ENCODE measurements at regions of chr1 and their contacts with region 1.

Region 1: GRCh38 chr1:210400043-210400840 is 71.5 kb downstream of the HHAT start:
- DNase-seq: peak; percentile 85
- H3K4me3 Mint-ChIP-seq: peak overlapping the region; percentile 49
- H3K27ac Mint-ChIP-seq: peak overlapping the region; percentile 93
- H3K4me1 Mint-ChIP-seq: peaks cover 44% of the 10 kb centered on the region
- H3K27me3 Mint-ChIP-seq: peaks cover 5% of the 10 kb centered on the region

Region 2: GRCh38 chr1:209827384-209828262 is 572.6 kb before region 1 on chr1 and contains the start of gene UTP25:
- CTCF ChIA-PET with region 1: interaction called, 4 read pairs
- intact Hi-C with region 1: loop called (anchors 2 kb)
- DNase-seq: peak; percentile 97
- H3K4me3 Mint-ChIP-seq: peak within 1 kb of the TSS; percentile 79
- H3K27ac Mint-ChIP-seq: peak within 1 kb of the TSS; percentile 86
- H3K4me1 Mint-ChIP-seq: peaks cover 34% of the 10 kb centered on the region
- H3K27me3 Mint-ChIP-seq: peaks cover 4% of the 10 kb centered on the region
- total RNA-seq, gene UTP25: 4.1 to 4.6 TPM

Region 3: GRCh38 chr1:210143465-210144062 is 256.7 kb before region 1 on chr1:
- CTCF ChIA-PET with region 1: interaction called, 7 read pairs
- intact Hi-C with region 1: loop called (anchors 1 kb)
- DNase-seq: peak; percentile 77
- H3K4me3 Mint-ChIP-seq: no peak overlapping the region
- H3K27ac Mint-ChIP-seq: no peak overlapping the region
- H3K4me1 Mint-ChIP-seq: no peaks in the 10 kb centered on the region
- H3K27me3 Mint-ChIP-seq: peaks cover 13% of the 10 kb centered on the region

Region 4: DNA sequence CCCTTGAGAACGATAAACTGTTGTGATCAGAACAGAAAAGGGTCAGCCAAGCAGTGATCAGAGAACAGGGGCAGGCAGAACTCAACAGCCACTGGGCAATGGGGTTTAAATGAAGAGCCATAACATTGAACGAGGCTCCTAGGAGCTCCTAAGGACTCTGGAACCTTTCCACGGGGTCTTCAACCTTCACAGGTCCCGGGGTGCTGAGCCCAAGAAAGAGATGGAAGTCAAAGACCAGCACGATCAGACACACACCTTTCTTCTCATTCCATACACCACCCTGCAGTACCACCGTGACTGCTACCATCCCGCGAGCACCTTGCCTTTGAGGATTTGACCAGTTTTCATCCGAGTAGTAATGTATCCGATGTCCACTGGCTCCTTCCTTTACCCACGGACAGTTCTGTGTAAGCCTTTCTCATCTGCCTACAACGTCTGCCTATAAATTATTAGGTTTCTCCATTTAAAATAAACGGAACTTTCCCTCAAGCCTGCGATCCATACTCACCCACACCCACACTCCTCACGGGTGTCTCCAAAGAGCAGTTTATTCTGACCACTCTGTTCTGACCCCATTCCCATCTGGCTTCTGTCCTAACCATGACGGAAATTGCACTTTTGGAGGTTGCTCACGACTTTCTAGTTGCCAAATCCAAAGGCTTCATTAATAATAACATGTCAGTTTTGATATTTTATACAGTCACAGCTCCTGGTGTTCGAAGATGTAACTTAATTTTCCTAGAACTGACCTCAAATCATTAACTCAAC is 88.3 kb before region 1 on chr1:
- CTCF ChIA-PET with region 1: interaction called, 3 read pairs
- intact Hi-C with region 1: loop called (anchors 1 kb)
- DNase-seq: no peak
- H3K4me3 Mint-ChIP-seq: peak overlapping the region; percentile 79
- H3K27ac Mint-ChIP-seq: no peak overlapping the region
- H3K4me1 Mint-ChIP-seq: peaks cover 4% of the 10 kb centered on the region
- H3K27me3 Mint-ChIP-seq: peaks cover 20% of the 10 kb centered on the region

Region 5: DNA sequence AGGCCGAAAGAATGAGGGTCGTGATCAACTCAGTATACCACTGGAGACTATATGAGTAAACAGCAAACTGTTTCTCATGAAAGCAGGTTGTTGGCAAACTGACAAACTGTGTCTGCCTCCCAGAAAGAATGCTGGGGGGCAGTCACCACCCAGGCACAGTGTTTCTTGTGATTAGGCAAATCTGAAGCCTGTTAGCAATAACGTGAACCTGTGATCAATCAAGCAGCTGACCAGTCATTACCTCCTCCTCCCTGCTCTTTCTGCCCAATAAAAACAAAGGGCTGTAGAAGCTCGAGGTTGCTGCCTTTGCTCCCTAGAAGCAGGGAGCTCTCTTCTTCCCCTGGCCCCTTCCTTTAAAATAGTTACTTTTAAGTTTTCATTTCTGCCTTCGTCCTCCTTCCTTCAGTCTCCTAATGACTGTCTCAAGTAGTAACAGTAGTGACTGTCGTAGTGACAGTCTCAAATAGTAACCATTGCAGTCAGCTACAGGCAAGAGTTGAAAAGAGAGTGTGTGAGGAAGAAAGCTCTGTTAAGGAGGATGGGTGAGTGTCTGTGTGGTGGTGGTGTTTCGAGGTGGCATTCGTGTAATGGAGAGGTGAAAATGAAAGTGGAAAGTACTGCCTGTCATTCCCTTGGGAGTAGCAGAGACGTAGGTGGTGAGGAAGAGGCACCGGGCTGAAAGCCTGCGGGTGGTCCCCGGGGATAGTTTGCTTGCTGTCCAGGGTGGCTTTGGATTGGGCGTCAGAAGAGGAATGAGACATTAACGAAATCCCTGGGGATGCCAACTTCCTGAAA is 57.1 kb before region 1 on chr1:
- CTCF ChIA-PET with region 1: interaction called, 8 read pairs
- intact Hi-C with region 1: loop called (anchors 1 kb)
- DNase-seq: no peak
- H3K4me3 Mint-ChIP-seq: no peak overlapping the region
- H3K27ac Mint-ChIP-seq: no peak overlapping the region
- H3K4me1 Mint-ChIP-seq: peaks cover 40% of the 10 kb centered on the region
- H3K27me3 Mint-ChIP-seq: no peaks in the 10 kb centered on the region

Region 6: DNA sequence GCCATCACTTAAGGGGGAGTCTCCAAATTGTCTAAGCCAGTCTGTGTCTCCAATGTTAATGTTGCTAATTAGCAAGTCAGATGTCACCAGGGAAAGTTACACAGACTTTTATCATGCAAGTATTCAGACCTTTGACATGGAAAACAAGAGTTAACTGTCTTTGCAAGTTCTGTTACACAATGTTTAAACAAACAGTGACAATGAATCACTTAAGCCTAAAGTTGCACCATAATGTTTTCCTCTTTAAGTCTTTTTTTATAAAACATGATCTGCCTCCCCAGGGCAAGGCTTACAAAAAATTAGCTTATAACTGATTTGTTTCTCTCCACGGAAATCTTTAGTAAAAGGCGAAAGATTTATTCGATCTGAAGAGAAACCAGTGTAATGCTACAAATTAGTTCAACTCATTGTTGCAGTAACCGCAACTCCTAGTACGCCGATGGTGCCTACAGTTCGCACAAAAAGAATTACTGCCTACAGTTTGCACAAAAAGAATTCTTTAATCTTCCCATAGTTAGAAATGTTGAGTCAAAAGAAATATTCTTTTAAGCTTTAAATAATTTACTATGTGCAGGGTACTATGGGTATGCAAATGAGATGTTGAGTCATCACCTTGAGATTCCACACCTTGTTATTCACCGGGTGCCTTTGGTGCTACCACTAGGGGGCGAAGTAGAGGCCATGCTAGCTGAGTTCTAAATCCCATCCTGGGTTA is 26.2 kb before region 1 on chr1:
- CTCF ChIA-PET with region 1: interaction called, 48 read pairs
- intact Hi-C with region 1: loop called (anchors 1 kb)
- DNase-seq: peak; percentile 93
- H3K4me3 Mint-ChIP-seq: no peak overlapping the region
- H3K27ac Mint-ChIP-seq: peak overlapping the region; percentile 88
- H3K4me1 Mint-ChIP-seq: peaks cover 36% of the 10 kb centered on the region
- H3K27me3 Mint-ChIP-seq: no peaks in the 10 kb centered on the region

Region 7: GRCh38 chr1:210438928-210439809 is 38.9 kb after region 1 on chr1:
- CTCF ChIA-PET with region 1: no interaction called
- intact Hi-C with region 1: no loop called
- DNase-seq: no peak
- H3K4me3 Mint-ChIP-seq: no peak overlapping the region
- H3K27ac Mint-ChIP-seq: no peak overlapping the region
- H3K4me1 Mint-ChIP-seq: no peaks in the 10 kb centered on the region
- H3K27me3 Mint-ChIP-seq: no peaks in the 10 kb centered on the region

Region 8: DNA sequence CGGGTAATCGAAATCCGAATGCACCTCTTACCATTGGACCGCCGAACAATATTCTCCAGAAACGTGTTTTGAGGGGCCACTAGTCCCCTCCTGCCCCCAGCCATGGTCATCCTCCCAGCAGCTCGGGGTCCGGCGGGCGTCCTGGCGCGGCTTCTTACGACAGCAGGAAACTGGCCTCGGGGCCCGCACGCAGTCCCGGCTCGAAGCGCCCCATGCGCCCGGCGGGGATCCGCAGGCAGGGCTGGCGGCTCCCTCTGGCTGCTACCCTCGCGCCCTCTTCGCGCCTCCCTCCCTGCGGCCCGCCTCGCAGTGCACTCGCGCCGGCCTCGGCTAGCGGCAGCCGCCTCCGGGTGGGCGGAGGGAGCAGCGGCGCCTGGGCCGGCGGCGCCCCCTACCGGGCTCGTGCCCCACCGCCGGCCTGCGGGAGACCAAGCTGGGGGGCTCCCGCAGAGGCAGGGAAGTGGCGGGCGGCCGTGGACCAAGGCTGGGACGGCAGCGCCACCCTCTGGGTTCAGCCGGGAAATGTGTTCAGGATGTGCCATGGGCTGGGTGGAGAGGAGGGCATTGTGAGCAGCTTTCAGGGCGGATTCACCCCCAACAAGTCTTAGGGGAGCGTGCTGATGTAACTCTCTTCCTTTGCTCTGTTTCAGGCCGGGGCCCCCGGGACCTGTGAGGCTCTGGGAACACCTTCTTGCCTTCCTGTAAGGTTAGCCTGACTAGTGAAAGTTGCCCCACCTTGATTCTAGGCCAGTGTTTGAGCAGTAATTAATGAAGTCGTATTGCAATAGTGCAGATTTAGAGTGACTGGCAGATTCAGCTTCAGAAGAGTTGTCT is 733.8 kb after region 1 on chr1 and contains the start of gene KCNH1:
- CTCF ChIA-PET with region 1: interaction called, 21 read pairs
- intact Hi-C with region 1: no loop called
- DNase-seq: peak; percentile 90
- H3K4me3 Mint-ChIP-seq: peak within 1 kb of the TSS; percentile 66
- H3K27ac Mint-ChIP-seq: no peak within 1 kb of the TSS
- H3K4me1 Mint-ChIP-seq: peaks cover 7% of the 10 kb centered on the region
- H3K27me3 Mint-ChIP-seq: peaks cover 50% of the 10 kb centered on the region
- total RNA-seq, gene KCNH1: not detected